Right cardiac atrium (tissue), 5 donors: ENCODE measurements at regions of chr16 and their contacts with region 1.

Region 1: GRCh38 chr16:75519881-75520280 is 16.0 kb downstream of the CHST5 start:
- DNase-seq: no peak
- ATAC-seq: no peak
- H3K4me3 ChIP-seq: no peak overlapping the region
- H3K27ac ChIP-seq: no peak overlapping the region
- H3K4me1 ChIP-seq: no peaks in the 10 kb centered on the region
- H3K27me3 ChIP-seq: no peaks in the 10 kb centered on the region

Region 2: DNA sequence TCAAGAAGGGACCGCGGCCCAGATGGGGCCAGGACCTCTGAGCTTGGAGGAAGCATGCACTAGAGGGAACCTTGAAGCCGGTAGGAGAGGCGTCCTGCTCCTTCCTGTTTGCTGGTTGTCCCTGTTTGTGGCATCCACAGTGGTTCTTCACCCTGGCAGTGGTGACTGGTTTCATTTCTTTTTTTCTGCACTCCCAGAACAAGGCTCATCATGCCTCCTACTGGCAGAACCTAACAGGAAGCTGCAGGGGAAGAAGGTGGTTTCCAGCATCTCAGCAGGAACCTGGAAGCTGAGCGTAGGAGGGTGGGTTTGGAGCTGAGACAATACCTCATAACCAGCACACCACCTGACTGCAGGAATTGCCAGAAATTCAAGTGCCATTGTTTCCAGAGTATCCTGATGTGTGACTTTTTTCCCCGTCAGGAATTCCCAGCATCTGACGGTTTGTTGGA is 30.4 kb after region 1 on chr16:
- intact Hi-C with region 1: loop called in 2 of 4 experiments (anchors 5 kb)
- DNase-seq: peak in 2 of 3 donors; percentile 28 to 47
- ATAC-seq: peak; percentile 47 to 79
- H3K4me3 ChIP-seq: no peak overlapping the region
- H3K27ac ChIP-seq: peak overlapping the region; percentile 51
- H3K4me1 ChIP-seq: no peaks in the 10 kb centered on the region
- H3K27me3 ChIP-seq: no peaks in the 10 kb centered on the region

Region 3: DNA sequence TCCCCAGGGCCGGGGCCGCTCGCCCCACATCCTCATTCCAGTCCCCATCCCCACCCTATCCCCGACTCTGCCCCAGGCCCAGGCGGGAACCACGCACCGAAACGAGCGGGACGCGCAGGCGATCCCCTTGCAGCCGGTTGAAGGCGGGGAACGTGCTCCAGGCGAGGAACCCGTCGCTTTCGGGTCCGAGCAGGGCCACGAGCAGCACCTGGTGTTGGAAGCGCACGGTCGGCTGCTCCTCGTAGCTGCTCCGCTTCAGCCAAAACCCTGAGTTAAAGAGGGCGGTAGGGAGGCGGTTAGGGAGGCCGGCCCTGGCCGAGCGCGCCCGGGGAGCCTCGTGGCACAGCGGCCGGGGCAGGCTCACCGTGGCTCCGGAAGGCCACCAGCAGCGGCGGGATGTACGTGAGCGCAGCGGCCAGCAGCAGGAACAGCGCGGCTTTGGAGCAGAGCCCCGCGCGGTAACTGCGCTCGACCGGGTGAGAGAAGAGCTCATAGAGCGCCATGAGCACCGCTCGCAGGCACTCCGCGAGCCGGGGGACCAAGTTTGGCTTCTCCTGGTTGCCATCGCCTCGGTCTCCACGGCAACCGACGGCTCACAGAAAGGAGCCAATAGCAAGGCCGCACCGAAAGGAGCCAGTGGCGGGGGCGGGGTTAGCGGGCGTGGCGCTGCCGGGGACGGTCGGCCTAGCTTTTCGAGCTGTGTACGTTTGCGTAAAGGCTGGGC is 36.0 kb after region 1 on chr16 and contains the start of gene TMEM231:
- intact Hi-C with region 1: loop called in 2 of 4 experiments (anchors 5 kb)
- DNase-seq: peak; percentile 99 to 100 (median 99)
- ATAC-seq: peak; percentile 98
- H3K4me3 ChIP-seq: peak within 1 kb of the TSS; percentile 69
- H3K27ac ChIP-seq: peak within 1 kb of the TSS; percentile 64
- H3K4me1 ChIP-seq: no peaks in the 10 kb centered on the region
- H3K27me3 ChIP-seq: no peaks in the 10 kb centered on the region
- total RNA-seq, gene TMEM231: 6.3 to 7.8 (median 6.8) TPM

Region 4: DNA sequence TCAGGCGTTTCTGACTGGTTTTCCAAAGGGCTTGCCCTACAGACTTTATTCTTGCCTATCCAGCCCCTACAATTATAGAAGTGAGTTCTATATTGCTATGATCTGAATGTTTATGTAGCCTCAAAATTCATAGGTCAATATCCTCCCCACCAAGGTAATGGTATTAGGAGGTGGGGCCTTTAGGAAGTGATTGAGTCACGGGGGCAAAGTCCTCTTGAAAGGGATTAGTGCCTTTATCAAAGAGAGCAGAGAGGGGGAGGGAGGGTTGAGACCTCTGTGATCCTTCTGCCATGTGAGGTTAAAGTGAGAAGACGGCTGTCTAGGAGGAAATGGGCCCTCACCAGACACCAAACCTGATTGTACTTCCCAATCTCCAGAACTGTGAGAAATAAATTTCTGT is 207.3 kb after region 1 on chr16:
- intact Hi-C with region 1: no loop called
- DNase-seq: no peak
- ATAC-seq: no peak
- H3K4me3 ChIP-seq: no peak overlapping the region
- H3K27ac ChIP-seq: no peak overlapping the region
- H3K4me1 ChIP-seq: no peaks in the 10 kb centered on the region
- H3K27me3 ChIP-seq: no peaks in the 10 kb centered on the region